Activated CD4-positive, alpha-beta memory T cell treated with anti-CD3 and anti-CD28 coated beads for 36 hours (primary cell): ENCODE measurements at regions of chr4 and their contacts with region 1.

Region 1: DNA sequence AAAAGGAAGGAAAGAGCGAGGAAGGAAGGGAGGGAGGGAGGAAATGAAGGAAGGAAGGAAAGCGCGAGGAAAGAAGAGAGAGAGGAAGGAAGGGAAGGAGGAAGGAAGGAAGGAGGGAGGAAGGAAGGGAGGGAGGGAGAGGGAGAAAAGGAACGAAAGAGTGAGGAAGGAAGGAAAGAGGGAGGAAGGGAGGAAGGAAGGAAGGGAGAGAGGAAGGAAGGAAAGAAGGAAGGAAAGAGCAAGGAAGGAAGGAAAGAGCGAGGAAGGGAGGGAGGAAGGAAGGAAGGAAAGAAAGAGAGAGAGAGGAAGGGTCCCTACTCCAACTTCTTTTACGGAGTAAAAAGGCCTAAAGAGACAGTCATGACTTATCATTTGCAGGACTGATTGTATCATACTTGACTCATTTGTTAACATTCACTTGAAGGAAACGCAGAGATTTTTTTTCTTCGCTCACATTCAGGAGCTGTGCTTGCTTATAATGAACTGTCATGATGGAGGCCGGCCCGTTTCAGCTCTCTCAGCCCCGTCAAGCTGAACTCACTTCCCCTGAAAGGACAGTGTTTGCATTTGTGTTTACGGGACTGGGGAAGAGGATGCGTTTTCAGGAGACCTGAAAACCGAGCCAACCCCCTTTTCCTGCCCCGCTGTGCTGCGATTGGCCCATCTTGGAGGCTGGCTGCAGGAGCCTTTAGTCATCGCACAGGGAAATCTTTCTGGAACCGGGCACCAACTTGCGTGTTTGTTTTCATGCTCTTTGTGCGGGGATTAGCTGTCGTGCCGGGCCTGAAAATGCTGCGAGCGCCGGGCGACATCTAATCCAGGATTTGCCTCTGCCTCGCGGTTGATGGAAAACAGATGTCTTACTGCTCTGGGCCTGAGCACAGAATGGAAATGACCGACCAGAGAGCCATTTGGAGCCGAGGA is 17.8 kb downstream of the TRIM2 start:
- DNase-seq: peak; percentile 56
- H3K4me3 Mint-ChIP-seq: peak overlapping the region; percentile 79
- H3K27ac Mint-ChIP-seq: peak overlapping the region; percentile 36
- H3K4me1 Mint-ChIP-seq: peaks cover 42% of the 10 kb centered on the region
- H3K27me3 Mint-ChIP-seq: no peaks in the 10 kb centered on the region

Region 2: GRCh38 chr4:153099391-153100140 is 122.5 kb before region 1 on chr4:
- CTCF ChIA-PET with region 1: no interaction called
- POLR2A ChIA-PET with region 1: no interaction called
- intact Hi-C with region 1: no loop called
- DNase-seq: no peak
- H3K4me3 Mint-ChIP-seq: no peak overlapping the region
- H3K27ac Mint-ChIP-seq: no peak overlapping the region
- H3K4me1 Mint-ChIP-seq: peaks cover 2% of the 10 kb centered on the region
- H3K27me3 Mint-ChIP-seq: no peaks in the 10 kb centered on the region

Region 3: GRCh38 chr4:153159728-153160221 is 62.3 kb before region 1 on chr4:
- CTCF ChIA-PET with region 1: no interaction called
- POLR2A ChIA-PET with region 1: no interaction called
- intact Hi-C with region 1: loop called (anchors 2 kb)
- DNase-seq: no peak
- H3K4me3 Mint-ChIP-seq: peak overlapping the region; percentile 30
- H3K27ac Mint-ChIP-seq: peak overlapping the region; percentile 68
- H3K4me1 Mint-ChIP-seq: peaks cover 45% of the 10 kb centered on the region
- H3K27me3 Mint-ChIP-seq: peaks cover 5% of the 10 kb centered on the region

Region 4: GRCh38 chr4:153204247-153205027 is 17.6 kb before region 1 on chr4 and contains the start of gene TRIM2:
- CTCF ChIA-PET with region 1: no interaction called
- POLR2A ChIA-PET with region 1: interaction called, 3 read pairs
- intact Hi-C with region 1: loop called (anchors 2 kb)
- DNase-seq: no peak
- H3K4me3 Mint-ChIP-seq: peak within 1 kb of the TSS; percentile 64
- H3K27ac Mint-ChIP-seq: peak within 1 kb of the TSS; percentile 66
- H3K4me1 Mint-ChIP-seq: peaks cover 35% of the 10 kb centered on the region
- H3K27me3 Mint-ChIP-seq: no peaks in the 10 kb centered on the region
- total RNA-seq, gene TRIM2: 1.7 to 2.9 TPM

Region 5: GRCh38 chr4:153232768-153233167 is 10.7 kb after region 1 on chr4:
- CTCF ChIA-PET with region 1: interaction called, 3 read pairs
- POLR2A ChIA-PET with region 1: no interaction called
- intact Hi-C with region 1: loop called (anchors 2 kb)
- DNase-seq: peak; percentile 35
- H3K4me3 Mint-ChIP-seq: no peak overlapping the region
- H3K27ac Mint-ChIP-seq: no peak overlapping the region
- H3K4me1 Mint-ChIP-seq: peaks cover 34% of the 10 kb centered on the region
- H3K27me3 Mint-ChIP-seq: peaks cover 1% of the 10 kb centered on the region

Region 6: GRCh38 chr4:153249199-153250041 is 27.4 kb after region 1 on chr4:
- CTCF ChIA-PET with region 1: no interaction called
- POLR2A ChIA-PET with region 1: no interaction called
- intact Hi-C with region 1: loop called (anchors 1 kb)
- DNase-seq: peak; percentile 91
- H3K4me3 Mint-ChIP-seq: peak overlapping the region; percentile 81
- H3K27ac Mint-ChIP-seq: peak overlapping the region; percentile 82
- H3K4me1 Mint-ChIP-seq: peaks cover 16% of the 10 kb centered on the region
- H3K27me3 Mint-ChIP-seq: no peaks in the 10 kb centered on the region